PC-9 (cell line): ENCODE measurements at regions of chr12 and their contacts with region 1.

Region 1: DNA sequence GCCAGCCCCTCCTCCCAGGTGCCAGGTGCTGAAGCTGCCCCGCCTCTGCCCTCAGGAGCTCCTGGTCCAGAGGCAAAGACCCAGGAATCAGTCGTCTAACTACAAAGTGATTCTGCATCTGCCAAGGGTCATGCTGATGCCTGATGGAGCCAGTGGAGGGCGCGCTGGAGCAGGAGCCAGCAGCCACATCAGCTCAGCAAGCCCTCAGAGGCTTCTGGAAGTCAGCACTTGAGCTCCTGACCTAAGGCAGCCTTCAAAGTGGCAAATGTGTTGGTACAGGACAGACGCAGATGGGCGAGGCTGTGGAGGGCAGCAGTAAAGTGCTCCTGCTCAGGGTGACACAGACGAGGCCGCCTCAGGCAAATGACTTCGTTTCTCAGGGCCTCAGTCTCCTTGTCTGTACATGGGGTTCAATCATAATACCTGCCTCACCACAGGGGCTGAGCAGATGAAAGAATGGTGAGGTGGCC is 10.9 kb downstream of the C12orf43 start:
- DNase-seq: peak; percentile 58 to 60
- H3K4me3 ChIP-seq: no peak overlapping the region
- H3K27ac ChIP-seq: no peak overlapping the region
- H3K4me1 ChIP-seq: no peaks in the 10 kb centered on the region
- H3K27me3 ChIP-seq: no peaks in the 10 kb centered on the region
- CTCF ChIP-seq: peak; percentile 75

Region 2: GRCh38 chr12:121069206-121069605 is 63.8 kb after region 1 on chr12:
- CTCF ChIA-PET with region 1: no interaction called
- POLR2A ChIA-PET with region 1: no interaction called
- intact Hi-C with region 1: no loop called
- DNase-seq: peak in 1 of 2 experiments; percentile 4
- H3K4me3 ChIP-seq: no peak overlapping the region
- H3K27ac ChIP-seq: no peak overlapping the region
- H3K4me1 ChIP-seq: no peaks in the 10 kb centered on the region
- H3K27me3 ChIP-seq: no peaks in the 10 kb centered on the region
- CTCF ChIP-seq: no peak

Region 3: DNA sequence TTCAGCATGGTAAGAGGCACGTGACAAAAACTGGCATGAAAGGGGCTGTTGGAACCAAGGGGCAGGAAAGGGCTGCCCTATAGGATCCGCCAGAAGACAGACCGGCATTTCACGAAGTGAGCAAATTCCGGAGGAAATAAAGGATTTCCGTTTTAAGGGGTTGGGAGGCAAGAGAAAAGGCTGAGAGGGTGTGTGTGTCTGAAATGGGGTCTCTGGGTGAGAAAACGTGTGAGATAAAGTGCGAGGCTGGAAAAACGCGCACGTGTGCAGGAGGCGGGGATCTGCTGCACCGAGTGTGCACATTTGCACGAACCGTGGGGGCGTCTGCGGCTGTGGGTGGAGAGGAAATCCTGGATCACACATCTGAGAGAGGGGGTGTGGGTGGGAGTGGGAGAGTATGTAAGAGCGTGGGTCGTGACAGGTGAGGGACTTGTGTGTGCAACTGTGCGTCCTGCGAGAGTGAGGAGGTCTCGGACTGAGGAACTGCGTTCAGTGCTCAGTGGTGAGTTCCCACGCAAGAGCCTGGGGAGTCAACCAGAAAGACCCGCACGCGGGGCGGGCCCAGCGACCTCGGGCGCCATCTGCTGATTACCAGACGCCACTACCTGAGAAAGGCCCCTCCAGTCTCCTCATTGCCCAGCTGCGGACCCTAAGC is 90.3 kb after region 1 on chr12:
- CTCF ChIA-PET with region 1: interaction called, 4 read pairs
- POLR2A ChIA-PET with region 1: no interaction called
- intact Hi-C with region 1: loop called (anchors 10 kb)
- DNase-seq: peak in 1 of 2 experiments; percentile 60
- H3K4me3 ChIP-seq: peak overlapping the region; percentile 50
- H3K27ac ChIP-seq: no peak overlapping the region
- H3K4me1 ChIP-seq: no peaks in the 10 kb centered on the region
- H3K27me3 ChIP-seq: peaks cover 14% of the 10 kb centered on the region; the same call in 1 of the 2 replicates
- CTCF ChIP-seq: peak; percentile 73

Region 4: DNA sequence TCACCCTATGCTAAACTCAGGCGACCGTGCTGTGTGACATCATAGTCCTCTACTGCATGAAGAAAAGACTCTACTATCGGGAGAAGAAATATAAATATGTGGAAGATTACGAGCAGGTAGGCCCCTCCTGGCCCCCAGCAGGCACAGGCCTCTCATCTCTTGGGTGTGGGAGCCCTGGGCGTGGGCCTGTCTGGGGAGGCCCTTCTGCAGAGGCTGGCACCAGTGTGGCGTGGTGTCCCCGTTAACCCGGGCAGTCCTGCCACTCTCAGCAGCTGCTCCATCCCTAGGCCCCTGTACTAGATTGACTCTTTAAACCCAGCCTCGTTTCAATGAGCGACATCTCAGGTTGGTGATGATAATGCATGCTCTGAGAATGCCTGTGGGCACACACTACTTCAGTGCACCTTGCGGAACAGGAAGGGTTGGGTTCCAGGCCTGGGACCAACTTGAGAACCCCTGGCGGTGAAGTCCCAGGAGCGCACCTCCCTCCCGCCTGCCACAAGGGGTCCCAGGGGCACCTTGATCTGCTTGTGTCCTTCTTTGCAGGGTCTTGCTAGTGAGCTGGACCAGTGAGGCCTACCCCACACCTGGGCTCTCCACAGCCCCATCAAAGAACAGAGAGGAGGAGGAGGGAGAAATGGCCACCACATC is 227.7 kb after region 1 on chr12:
- CTCF ChIA-PET with region 1: no interaction called
- POLR2A ChIA-PET with region 1: no interaction called
- intact Hi-C with region 1: loop called (anchors 2 kb)
- DNase-seq: no peak
- H3K4me3 ChIP-seq: no peak overlapping the region
- H3K27ac ChIP-seq: no peak overlapping the region
- H3K4me1 ChIP-seq: peaks cover 24% of the 10 kb centered on the region
- H3K27me3 ChIP-seq: no peaks in the 10 kb centered on the region
- CTCF ChIP-seq: no peak

Region 5: GRCh38 chr12:121279507-121279915 is 274.1 kb after region 1 on chr12:
- CTCF ChIA-PET with region 1: no interaction called
- POLR2A ChIA-PET with region 1: no interaction called
- intact Hi-C with region 1: no loop called
- DNase-seq: no peak
- H3K4me3 ChIP-seq: no peak overlapping the region
- H3K27ac ChIP-seq: no peak overlapping the region
- H3K4me1 ChIP-seq: peaks cover 12% of the 10 kb centered on the region
- H3K27me3 ChIP-seq: no peaks in the 10 kb centered on the region
- CTCF ChIP-seq: no peak